ENCODE measurements at regions of chr2 and their contacts with region 1.

Region 1: DNA sequence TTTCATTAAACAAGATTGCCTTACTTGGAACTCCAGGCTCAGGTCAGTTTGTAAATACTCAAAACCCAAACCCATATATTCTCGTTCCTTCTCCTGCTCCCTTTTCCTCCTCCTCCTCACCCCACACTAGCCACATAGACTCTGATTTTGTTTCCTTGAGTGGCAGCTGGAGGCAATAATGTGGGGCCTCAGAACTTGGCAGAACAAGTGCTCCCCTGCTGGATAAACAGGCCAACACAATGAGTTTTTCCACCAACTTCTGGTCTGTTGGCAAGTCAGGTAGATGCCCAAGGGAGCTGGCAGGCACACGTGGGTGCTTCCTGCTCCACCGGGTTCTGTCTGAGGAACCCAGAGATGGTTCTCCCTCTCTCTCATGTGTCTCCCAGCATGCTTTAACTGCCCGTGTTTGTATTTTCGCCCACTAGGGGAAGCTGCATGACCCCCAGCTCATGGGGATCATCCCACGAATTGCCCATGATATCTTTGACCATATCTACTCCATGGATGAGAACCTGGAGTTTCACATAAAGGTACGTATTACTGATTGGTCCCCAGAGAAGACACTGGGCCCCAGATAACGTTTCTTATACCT is 61.9 kb downstream of the KIF5C start:
- DNase-seq: no peak
- H3K4me3 Mint-ChIP-seq: no peak overlapping the region
- H3K27ac Mint-ChIP-seq: no peak overlapping the region
- H3K4me1 Mint-ChIP-seq: no peaks in the 10 kb centered on the region
- H3K27me3 Mint-ChIP-seq: no peaks in the 10 kb centered on the region

Region 2: DNA sequence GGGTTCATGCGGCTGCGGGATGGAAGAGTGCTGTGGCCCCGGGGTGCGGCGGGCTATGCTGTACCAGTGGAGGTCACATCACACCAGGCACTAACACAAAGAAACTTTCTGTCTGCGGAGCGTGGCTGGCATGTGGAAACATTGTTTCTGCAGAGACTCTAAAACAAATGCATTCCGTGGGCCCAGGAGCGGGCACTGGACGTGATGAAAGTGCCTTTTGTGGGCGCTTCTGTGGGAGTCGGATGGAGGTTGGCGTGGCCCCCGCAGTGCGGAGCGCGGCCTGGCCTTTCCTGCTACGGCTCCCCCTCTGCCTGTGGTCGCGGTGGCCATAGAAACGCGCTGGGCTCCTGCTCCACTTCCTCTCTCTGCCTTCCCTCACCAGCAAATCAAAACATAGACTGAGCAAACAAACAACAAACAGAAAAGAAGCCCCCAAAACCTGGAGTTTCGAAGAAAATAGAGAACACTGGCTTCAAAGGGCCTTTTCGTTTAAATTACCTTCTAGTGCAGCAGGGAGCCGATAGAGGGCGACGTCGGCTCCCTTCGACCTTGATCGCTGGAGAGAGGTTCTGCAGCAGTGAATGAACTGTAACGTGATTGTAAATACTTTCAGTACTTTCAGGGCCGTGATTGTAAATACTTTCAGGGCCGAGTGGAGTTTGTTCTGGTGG is 10.5 kb before region 1 on chr2:
- CTCF ChIA-PET with region 1: interaction called, 12 read pairs
- POLR2A ChIA-PET with region 1: no interaction called
- DNase-seq: peak; percentile 66
- H3K4me3 Mint-ChIP-seq: peak overlapping the region; percentile 82
- H3K27ac Mint-ChIP-seq: peak overlapping the region; percentile 92
- H3K4me1 Mint-ChIP-seq: peaks cover 35% of the 10 kb centered on the region
- H3K27me3 Mint-ChIP-seq: no peaks in the 10 kb centered on the region

Region 3: DNA sequence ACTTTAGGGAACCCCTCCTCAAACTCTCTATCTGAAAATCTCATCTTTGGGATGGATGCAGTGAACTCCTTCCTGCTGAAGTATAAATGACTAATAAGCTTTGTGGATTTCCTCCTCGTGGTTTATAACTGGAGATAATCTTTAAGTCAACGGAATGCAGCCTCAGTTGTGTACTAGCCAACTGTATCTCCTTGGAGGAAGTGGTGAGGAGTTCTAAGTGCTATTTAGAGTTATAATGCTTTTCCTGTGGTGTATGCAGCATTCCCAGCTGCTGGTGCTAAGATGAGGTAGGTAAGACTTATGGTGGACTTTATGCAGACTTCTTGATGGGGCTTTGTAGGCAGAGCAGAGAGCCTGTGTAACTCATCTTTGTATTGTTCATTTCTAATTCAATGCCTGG is 192.5 kb after region 1 on chr2:
- CTCF ChIA-PET with region 1: no interaction called
- POLR2A ChIA-PET with region 1: no interaction called
- DNase-seq: no peak
- H3K4me3 Mint-ChIP-seq: no peak overlapping the region
- H3K27ac Mint-ChIP-seq: no peak overlapping the region
- H3K4me1 Mint-ChIP-seq: no peaks in the 10 kb centered on the region
- H3K27me3 Mint-ChIP-seq: peaks cover 14% of the 10 kb centered on the region

Region 4: GRCh38 chr2:149679286-149679685 is 742.3 kb after region 1 on chr2:
- CTCF ChIA-PET with region 1: no interaction called
- POLR2A ChIA-PET with region 1: no interaction called
- DNase-seq: no peak
- H3K4me3 Mint-ChIP-seq: no peak overlapping the region
- H3K27ac Mint-ChIP-seq: no peak overlapping the region
- H3K4me1 Mint-ChIP-seq: no peaks in the 10 kb centered on the region
- H3K27me3 Mint-ChIP-seq: peaks cover 2% of the 10 kb centered on the region

Measured in activated CD4-positive, alpha-beta memory T cell treated with anti-CD3 and anti-CD28 coated beads, Interleukin-2, amount 10 ng/mL, durations not matched to agents 7 days and 5 days (primary cell).